Panc1 (cell line): ENCODE measurements at regions of chr1 and their contacts with region 1.

Region 1: GRCh38 chr1:21703318-21703963 is 34.3 kb upstream of the RAP1GAP start:
- DNase-seq: no peak
- ATAC-seq: peak; percentile 70; the same call in 1 of the 2 replicates
- H3K4me3 ChIP-seq: no peak overlapping the region
- H3K27ac ChIP-seq: no peak overlapping the region
- H3K4me1 ChIP-seq: no peaks in the 10 kb centered on the region
- H3K27me3 ChIP-seq: no peaks in the 10 kb centered on the region
- CTCF ChIP-seq: peak; percentile 69

Region 2: DNA sequence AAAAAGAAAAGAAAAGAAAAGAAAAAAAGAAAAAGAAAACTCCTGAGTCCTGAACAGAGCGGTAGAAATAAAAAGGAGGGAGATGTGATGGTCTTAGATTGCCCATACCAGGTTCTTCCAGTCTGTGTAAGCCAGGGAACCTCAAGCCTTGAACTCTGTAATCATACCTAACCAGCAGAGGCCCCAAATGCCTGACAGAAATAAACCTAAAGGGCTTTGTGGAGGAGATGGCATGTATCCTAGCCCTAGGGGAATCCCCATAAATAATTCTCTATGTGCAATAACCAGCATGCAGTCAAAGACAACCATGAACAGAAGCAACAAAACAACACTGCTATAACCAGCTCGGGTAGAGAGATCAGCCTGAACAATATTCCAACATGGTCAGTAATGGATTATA is 39.1 kb after region 1 on chr1:
- CTCF ChIA-PET with region 1: interaction called, 11 read pairs
- POLR2A ChIA-PET with region 1: no interaction called
- in situ Hi-C with region 1: no loop called
- intact Hi-C with region 1: no loop called
- DNase-seq: no peak
- ATAC-seq: no peak
- H3K4me3 ChIP-seq: no peak overlapping the region
- H3K27ac ChIP-seq: no peak overlapping the region
- H3K4me1 ChIP-seq: no peaks in the 10 kb centered on the region
- H3K27me3 ChIP-seq: no peaks in the 10 kb centered on the region
- CTCF ChIP-seq: no peak

Region 3: DNA sequence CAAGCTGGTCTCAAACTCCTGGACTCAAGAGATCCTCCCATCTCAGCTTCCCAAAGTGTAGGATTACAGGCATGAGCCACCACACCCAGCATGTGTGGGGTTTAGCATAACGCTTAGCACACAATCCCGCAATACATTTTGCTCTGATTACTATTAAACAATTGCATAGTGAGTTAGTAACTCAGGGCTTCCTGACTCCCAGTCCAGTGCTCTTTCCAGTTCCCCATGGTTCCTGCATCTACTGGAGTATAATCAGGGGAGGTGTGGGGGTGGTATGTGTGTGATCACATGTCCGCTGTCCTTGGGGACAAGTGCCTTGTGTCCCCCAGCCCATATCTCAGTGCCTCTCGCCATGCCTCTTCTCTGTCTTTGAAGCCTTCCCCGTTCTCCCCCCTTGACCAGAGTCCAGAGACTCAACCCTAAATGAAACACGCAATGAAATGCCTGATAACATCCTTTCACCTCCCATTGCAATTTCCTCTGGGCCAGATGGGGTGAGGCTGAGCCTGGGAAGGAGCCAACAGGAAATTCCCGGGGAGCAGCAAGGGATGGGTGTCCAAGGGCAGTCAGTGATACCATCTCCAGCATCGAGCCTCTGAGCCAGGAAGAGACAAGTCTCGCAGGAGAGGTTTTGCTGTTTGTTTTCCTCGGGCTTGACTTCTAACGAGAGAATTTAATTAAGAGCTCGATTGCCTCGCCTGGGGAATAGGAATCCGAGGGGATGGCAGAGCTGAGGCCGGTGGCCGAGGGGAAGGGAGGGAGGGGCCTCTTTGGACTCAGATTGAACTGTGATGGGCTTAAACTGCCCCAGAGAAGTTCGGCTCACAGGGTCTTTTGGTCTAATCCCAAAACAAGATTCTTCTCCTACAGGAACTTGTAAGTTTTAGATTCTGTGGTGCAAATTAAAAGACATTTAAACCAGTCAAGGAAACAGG is 1521.5 kb after region 1 on chr1:
- CTCF ChIA-PET with region 1: no interaction called
- POLR2A ChIA-PET with region 1: no interaction called
- in situ Hi-C with region 1: no loop called
- intact Hi-C with region 1: no loop called
- DNase-seq: no peak
- ATAC-seq: peak; percentile 50
- H3K4me3 ChIP-seq: no peak overlapping the region
- H3K27ac ChIP-seq: no peak overlapping the region; the same call in 1 of the 2 replicates
- H3K4me1 ChIP-seq: peaks cover 6% of the 10 kb centered on the region
- H3K27me3 ChIP-seq: no peaks in the 10 kb centered on the region
- CTCF ChIP-seq: no peak